Sigmoid colon (tissue), 7 donors: ENCODE measurements at regions of chr10 and their contacts with region 1.

Region 1: GRCh38 chr10:97686962-97687784 is at the start of gene AVPI1:
- DNase-seq: peak; percentile 99
- H3K4me3 ChIP-seq: peak within 1 kb of the TSS; percentile 67 to 76 (median 72)
- H3K27ac ChIP-seq: peak within 1 kb of the TSS; percentile 91 to 92 (median 92)
- H3K4me1 ChIP-seq: peaks cover 0 to 57% (median 53%) of the 10 kb centered on the region in 4 donors
- H3K27me3 ChIP-seq: no peaks in the 10 kb centered on the region
- CTCF ChIP-seq: no peak
- EP300 ChIP-seq: peak; percentile 75 to 95 (median 90)
- POLR2A ChIP-seq: peak; percentile 96 to 98
- total RNA-seq, gene AVPI1: 10.5 to 16.1 (median 12.2) TPM

Region 2: GRCh38 chr10:97640174-97640867 is 46.9 kb before region 1 on chr10 and contains the start of gene PI4K2A:
- intact Hi-C with region 1: loop called (anchors 2 kb)
- DNase-seq: peak; percentile 99
- H3K4me3 ChIP-seq: peak within 1 kb of the TSS; percentile 54 to 94 (median 82)
- H3K27ac ChIP-seq: peak within 1 kb of the TSS; percentile 85 to 95 (median 92)
- H3K4me1 ChIP-seq: peaks cover 0 to 25% (median 17%) of the 10 kb centered on the region in 4 donors
- H3K27me3 ChIP-seq: no peaks in the 10 kb centered on the region
- CTCF ChIP-seq: no peak
- EP300 ChIP-seq: no peak
- POLR2A ChIP-seq: peak; percentile 29 to 68
- total RNA-seq, gene PI4K2A: 13.3 to 19.3 (median 13.9) TPM